AG04449 (cell line): ENCODE measurements at regions of chr1 and their contacts with region 1.

Region 1: GRCh38 chr1:21255278-21255942 is 34.9 kb downstream of the ECE1 start:
- DNase-seq: no peak
- H3K4me3 ChIP-seq: no peak overlapping the region
- CTCF ChIP-seq: peak; percentile 91

Region 2: DNA sequence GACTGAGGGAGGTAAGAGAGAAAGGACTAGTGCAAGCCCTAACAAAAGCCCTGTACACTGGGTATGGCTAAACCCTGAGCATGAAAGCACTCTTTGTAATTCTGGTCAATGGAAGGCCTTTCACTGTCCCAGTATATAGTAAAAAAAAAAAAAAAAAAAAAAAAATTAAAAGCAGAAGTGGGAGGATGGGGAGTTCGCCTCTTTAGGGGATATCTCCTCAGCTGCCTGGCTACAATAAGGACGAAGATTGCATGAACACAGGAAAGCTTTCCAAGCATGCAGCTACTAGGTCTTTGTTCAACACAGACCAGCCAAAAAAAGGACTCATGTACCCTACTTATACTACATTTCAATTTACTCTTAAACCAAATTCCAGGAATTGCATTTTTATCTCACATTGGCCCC is 137.8 kb before region 1 on chr1:
- CTCF ChIA-PET with region 1: no interaction called
- POLR2A ChIA-PET with region 1: no interaction called
- DNase-seq: no peak
- H3K4me3 ChIP-seq: no peak overlapping the region
- CTCF ChIP-seq: no peak

Region 3: DNA sequence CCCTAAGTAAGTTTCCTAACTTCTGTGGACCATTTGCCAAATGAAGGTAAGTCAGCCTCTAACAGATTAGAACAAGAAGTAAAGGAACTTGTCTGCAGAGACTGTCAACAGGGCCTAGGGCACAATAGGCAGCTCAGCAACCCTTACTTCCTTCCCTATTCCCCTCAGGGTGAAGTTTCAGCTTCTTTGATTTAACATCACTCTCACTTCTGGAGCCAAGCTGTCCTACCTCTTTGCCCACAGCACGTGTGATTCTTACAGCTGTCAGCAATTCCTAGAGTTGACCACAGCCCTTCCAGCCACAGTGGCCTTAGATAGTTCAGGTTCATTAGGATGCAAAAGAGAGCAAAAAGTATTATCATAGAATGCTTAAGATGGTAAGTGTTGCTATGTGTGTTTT is 71.1 kb before region 1 on chr1:
- CTCF ChIA-PET with region 1: no interaction called
- POLR2A ChIA-PET with region 1: no interaction called
- DNase-seq: no peak
- H3K4me3 ChIP-seq: no peak overlapping the region
- CTCF ChIP-seq: no peak

Region 4: DNA sequence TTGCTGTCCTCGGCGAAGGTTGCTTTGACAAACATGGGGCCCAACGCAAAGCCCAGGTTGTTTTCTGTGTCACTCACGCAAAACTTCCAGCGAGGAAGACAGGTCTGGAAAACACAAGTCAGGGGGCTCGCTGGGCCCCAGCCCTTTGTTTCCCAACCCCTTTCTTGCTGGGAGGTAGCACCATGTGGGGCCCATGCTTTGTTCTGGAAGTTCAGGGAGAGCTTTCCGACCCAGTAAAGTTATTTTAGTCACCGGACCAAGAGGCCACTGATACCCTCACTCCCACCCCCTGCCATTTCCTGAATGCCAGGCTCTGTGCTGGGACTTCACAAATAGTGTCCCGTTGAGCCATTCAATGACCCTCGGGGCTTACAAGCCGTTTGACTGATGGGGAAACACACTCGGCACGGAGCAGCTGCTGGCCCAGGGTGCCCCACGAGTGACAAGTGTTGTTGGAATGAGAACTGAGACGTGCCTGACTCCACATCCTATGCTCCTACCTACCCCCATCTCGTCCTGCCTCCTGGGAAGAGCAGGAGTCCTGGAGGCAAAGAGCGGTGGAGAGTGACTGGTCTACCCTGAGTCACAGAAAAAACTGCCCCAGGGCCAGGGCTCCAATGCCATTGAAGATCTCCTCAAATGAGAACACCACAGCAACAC is 17.1 kb before region 1 on chr1:
- CTCF ChIA-PET with region 1: interaction called, 191 read pairs
- POLR2A ChIA-PET with region 1: no interaction called
- DNase-seq: peak; percentile 77
- H3K4me3 ChIP-seq: no peak overlapping the region
- CTCF ChIP-seq: no peak

Region 5: GRCh38 chr1:21270086-21270689 is 14.8 kb after region 1 on chr1:
- CTCF ChIA-PET with region 1: interaction called, 133 read pairs
- POLR2A ChIA-PET with region 1: no interaction called
- DNase-seq: no peak
- H3K4me3 ChIP-seq: no peak overlapping the region
- CTCF ChIP-seq: peak; percentile 89

Region 6: GRCh38 chr1:21313203-21313885 is 57.9 kb after region 1 on chr1:
- CTCF ChIA-PET with region 1: interaction called, 13 read pairs
- POLR2A ChIA-PET with region 1: no interaction called
- DNase-seq: no peak
- H3K4me3 ChIP-seq: no peak overlapping the region
- CTCF ChIP-seq: no peak

Region 7: GRCh38 chr1:21334214-21335087 is 79.0 kb after region 1 on chr1:
- CTCF ChIA-PET with region 1: interaction called, 163 read pairs
- POLR2A ChIA-PET with region 1: no interaction called
- DNase-seq: peak; percentile 65
- H3K4me3 ChIP-seq: peak overlapping the region; percentile 50
- CTCF ChIP-seq: peak; percentile 93

Region 8: GRCh38 chr1:21350187-21350885 is 94.9 kb after region 1 on chr1:
- CTCF ChIA-PET with region 1: interaction called, 25 read pairs
- POLR2A ChIA-PET with region 1: interaction called, 3 read pairs
- DNase-seq: no peak
- H3K4me3 ChIP-seq: no peak overlapping the region
- CTCF ChIP-seq: no peak